ENCODE measurements at regions of chr16 and their contacts with region 1.

Region 1: DNA sequence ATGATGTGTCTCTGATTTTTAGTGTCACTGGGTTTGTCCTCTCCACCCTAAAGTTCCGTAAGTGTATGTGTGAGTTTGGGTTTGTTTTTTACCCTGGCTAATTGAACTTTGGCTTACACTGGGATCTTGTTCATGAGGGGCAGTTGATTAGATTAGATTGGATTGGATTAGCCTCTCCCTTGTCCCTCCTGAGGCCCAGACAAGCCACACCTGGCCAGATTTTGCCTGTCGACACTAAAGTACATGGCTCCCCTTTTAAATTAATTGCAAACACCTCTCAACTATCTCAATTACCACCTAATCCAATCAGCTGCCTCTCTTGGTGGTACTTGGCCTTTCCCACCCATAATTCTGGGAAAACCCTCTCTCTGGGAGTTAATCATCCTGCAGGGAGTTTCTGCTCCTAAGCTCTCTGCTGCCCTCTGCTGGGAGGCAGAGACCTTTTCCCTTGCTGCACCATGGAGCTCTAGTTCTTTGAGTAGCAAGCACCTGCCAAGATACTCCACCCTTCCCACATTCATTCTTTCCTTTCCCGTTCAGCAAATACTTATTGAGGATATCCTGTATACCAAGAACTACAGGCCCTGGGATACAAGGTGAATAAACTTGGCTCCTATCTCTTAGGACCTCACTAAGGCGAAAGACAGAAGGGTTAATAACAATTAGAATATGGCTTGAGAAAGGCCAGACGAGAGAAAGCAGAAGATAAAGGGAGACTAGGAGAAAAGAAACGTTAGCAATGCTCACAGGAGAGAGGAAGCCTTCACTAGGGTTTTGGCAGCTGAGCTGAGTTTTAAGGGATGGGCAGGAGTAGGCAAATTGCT is 60.0 kb upstream of the MPHOSPH6 start:
- DNase-seq: peak; percentile 28 to 33
- ATAC-seq: peak; percentile 56 to 62
- H3K4me3 ChIP-seq: no peak overlapping the region
- H3K27ac ChIP-seq: no peak overlapping the region
- H3K4me1 ChIP-seq: no peaks in the 10 kb centered on the region
- H3K27me3 ChIP-seq: peaks cover 0 to 2% (median 0%) of the 10 kb centered on the region in 3 donors
- CTCF ChIP-seq: peak; percentile 61 to 88 (median 75)
- POLR2A ChIP-seq: no peak

Region 2: GRCh38 chr16:81885976-81886586 is 343.9 kb before region 1 on chr16:
- in situ Hi-C with region 1: loop called (anchors 5 to 10 kb)
- intact Hi-C with region 1: loop called (anchors 2 kb)
- DNase-seq: no peak
- ATAC-seq: no peak
- H3K4me3 ChIP-seq: no peak overlapping the region
- H3K27ac ChIP-seq: no peak overlapping the region
- H3K4me1 ChIP-seq: no peaks in the 10 kb centered on the region
- H3K27me3 ChIP-seq: no peaks in the 10 kb centered on the region
- CTCF ChIP-seq: peak in 3 of 5 experiments; percentile 19 to 41 (median 34)
- POLR2A ChIP-seq: no peak

Region 3: DNA sequence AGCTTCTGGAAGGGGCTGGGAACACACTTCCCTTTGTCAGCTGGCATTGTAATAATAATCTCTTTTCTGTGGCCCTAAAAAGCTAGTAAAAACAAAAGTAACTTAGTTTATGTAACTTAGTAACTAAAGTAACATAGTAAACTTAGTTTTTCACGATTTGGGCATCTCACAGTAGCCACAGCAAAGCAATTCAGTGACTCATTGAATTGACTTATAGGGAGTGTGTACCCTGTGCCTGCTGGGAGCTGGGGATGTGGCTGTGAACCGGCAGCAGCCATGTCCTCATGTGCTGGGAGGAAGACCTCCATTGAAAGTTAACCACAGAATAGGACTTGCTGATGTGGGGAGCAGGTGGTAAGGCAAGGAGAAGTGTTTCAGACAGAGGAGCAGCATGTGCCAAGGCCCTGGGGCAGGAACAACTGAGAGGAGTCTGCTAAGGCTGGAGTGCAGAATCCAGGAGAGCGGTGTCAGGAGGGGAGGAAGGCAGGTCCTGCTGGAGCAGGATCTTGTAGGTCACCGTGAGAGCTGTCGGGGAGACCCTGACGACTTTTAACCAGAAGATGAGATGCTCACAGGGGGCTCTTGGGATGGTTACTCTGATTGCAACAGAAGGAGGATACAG is 338.2 kb before region 1 on chr16:
- in situ Hi-C with region 1: loop called (anchors 5 to 10 kb)
- intact Hi-C with region 1: loop called (anchors 2 kb)
- DNase-seq: no peak
- ATAC-seq: no peak
- H3K4me3 ChIP-seq: no peak overlapping the region
- H3K27ac ChIP-seq: no peak overlapping the region
- H3K4me1 ChIP-seq: no peaks in the 10 kb centered on the region
- H3K27me3 ChIP-seq: no peaks in the 10 kb centered on the region
- CTCF ChIP-seq: no peak
- POLR2A ChIP-seq: no peak

Region 4: DNA sequence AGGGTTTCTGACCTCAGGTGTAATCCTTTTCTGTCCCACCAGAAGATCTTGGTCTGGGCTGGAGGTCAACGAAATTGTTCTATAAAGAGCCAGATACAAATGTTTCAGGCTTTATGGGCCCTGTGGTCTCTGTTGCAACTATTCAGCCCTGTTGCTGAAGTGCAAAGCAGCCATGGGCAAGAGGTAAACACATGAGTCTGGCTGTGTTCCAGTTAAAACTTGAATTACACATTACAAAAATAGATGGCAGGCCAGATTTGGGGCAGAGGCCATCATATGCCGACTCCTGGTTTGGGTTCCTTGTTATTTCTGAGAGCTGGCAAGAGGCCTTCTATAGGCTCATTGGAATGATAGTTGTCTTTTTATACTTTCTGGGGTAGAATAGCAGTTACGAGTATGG is 333.1 kb before region 1 on chr16:
- in situ Hi-C with region 1: loop called in 3 of 4 experiments (anchors 5 to 10 kb)
- intact Hi-C with region 1: no loop called
- DNase-seq: no peak
- ATAC-seq: no peak
- H3K4me3 ChIP-seq: no peak overlapping the region
- H3K27ac ChIP-seq: no peak overlapping the region
- H3K4me1 ChIP-seq: no peaks in the 10 kb centered on the region
- H3K27me3 ChIP-seq: no peaks in the 10 kb centered on the region
- CTCF ChIP-seq: no peak
- POLR2A ChIP-seq: no peak

Region 5: GRCh38 chr16:81939156-81940056 is 290.6 kb before region 1 on chr16:
- in situ Hi-C with region 1: no loop called
- intact Hi-C with region 1: loop called (anchors 5 kb)
- DNase-seq: no peak
- ATAC-seq: no peak
- H3K4me3 ChIP-seq: no peak overlapping the region
- H3K27ac ChIP-seq: no peak overlapping the region
- H3K4me1 ChIP-seq: no peaks in the 10 kb centered on the region
- H3K27me3 ChIP-seq: no peaks in the 10 kb centered on the region
- CTCF ChIP-seq: no peak
- POLR2A ChIP-seq: no peak

Region 6: DNA sequence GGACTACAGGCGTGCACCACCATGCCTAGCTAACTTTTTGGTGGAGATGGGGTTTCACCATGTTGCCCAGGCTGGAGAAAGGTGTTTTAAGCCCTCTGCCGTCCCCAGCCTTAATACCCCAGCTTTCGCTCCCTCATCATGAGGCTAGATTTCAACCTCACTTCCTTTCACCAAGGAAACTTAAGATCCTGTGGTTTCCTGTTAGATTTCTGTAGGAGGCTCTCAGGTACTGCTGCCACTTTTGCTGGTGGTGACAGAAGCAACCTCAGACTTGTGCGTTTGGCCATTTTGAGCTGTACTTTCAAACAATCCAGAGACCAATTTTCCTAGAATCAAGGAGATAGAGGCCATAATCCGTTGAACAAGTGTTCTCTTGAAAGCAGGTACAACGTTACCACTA is 96.2 kb before region 1 on chr16:
- in situ Hi-C with region 1: no loop called
- intact Hi-C with region 1: no loop called
- DNase-seq: no peak
- ATAC-seq: no peak
- H3K4me3 ChIP-seq: no peak overlapping the region
- H3K27ac ChIP-seq: no peak overlapping the region
- H3K4me1 ChIP-seq: no peaks in the 10 kb centered on the region
- H3K27me3 ChIP-seq: no peaks in the 10 kb centered on the region
- CTCF ChIP-seq: no peak
- POLR2A ChIP-seq: no peak